K562 (cell line): ENCODE measurements at regions of chr19 and their contacts with region 1.

Region 1: GRCh38 chr19:13366529-13367143 is 139.6 kb downstream of the CACNA1A start:
- DNase-seq: peak; percentile 51 to 61 (median 54)
- ATAC-seq: peak; percentile 86
- H3K4me3 ChIP-seq: no peak overlapping the region
- H3K27ac ChIP-seq: no peak overlapping the region
- H3K4me1 ChIP-seq: no peaks in the 10 kb centered on the region
- H3K27me3 ChIP-seq: peaks cover 6 to 26% of the 10 kb centered on the region in 2 experiments; a peak in 4 of 5 replicates
- CTCF ChIP-seq: peak; percentile 70 to 87 (median 84)
- EP300 ChIP-seq: no peak
- POLR2A ChIP-seq: no peak
- RAD21 ChIP-seq: peak; percentile 35 to 66

Region 2: DNA sequence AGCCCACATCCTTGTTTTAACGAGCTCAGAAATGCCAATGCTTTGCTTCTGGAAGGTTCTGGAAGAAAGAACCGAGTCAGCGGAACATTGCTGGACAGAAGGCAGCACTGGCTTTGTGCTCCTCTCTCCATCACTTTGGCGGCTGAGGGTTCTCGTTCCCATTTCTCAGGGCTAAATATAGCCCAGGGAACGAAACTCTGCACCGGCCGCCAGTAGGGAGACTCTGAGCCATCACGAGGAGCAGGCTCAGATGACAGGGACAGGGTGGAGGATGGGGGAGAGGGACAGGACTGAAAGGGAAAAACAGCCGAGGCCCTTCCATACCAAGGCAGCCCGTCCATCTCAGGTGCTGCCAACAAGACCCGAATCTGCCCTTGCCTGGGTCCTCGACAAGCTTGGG is 26.8 kb before region 1 on chr19:
- CTCF ChIA-PET with region 1: no interaction called
- POLR2A ChIA-PET with region 1: no interaction called
- in situ Hi-C with region 1: no loop called
- intact Hi-C with region 1: no loop called
- DNase-seq: no peak
- ATAC-seq: no peak
- H3K4me3 ChIP-seq: no peak overlapping the region
- H3K27ac ChIP-seq: no peak overlapping the region
- H3K4me1 ChIP-seq: no peaks in the 10 kb centered on the region
- H3K27me3 ChIP-seq: peaks cover 3 to 10% of the 10 kb centered on the region in 2 experiments; a peak in 3 of 5 replicates
- CTCF ChIP-seq: no peak
- EP300 ChIP-seq: no peak
- POLR2A ChIP-seq: no peak
- RAD21 ChIP-seq: no peak

Region 3: DNA sequence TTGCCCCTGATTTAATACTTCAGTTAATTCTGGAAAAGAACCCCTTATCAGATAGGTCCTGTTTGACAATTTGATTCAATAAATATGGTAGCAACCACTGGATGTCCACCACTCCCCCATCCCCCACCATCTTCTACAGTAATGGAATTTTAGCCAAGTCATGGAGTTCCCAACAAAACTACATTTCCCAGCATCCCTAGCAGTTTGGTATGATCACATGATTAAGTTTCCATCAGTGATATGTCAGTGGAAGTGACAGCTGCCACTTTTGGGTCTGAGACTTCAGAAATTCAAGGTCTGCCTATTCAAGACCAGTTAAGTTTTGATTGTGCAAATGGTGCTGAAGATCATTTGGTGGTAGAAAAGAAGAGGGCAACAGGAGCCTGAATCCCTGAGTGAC is 54.1 kb after region 1 on chr19:
- CTCF ChIA-PET with region 1: no interaction called
- POLR2A ChIA-PET with region 1: no interaction called
- in situ Hi-C with region 1: loop called (anchors 5 kb)
- intact Hi-C with region 1: no loop called
- DNase-seq: peak in 1 of 4 experiments; percentile 25
- ATAC-seq: peak; percentile 53; the same call in 2 of the 3 replicates
- H3K4me3 ChIP-seq: no peak overlapping the region
- H3K27ac ChIP-seq: no peak overlapping the region
- H3K4me1 ChIP-seq: no peaks in the 10 kb centered on the region; a peak in 1 of 5 replicates
- H3K27me3 ChIP-seq: peaks cover 0 to 12% of the 10 kb centered on the region in 2 experiments; a peak in 2 of 5 replicates
- CTCF ChIP-seq: no peak
- EP300 ChIP-seq: no peak
- POLR2A ChIP-seq: no peak
- RAD21 ChIP-seq: no peak

Region 4: GRCh38 chr19:13430790-13431582 is 64.3 kb after region 1 on chr19:
- CTCF ChIA-PET with region 1: interaction called, 53 read pairs
- POLR2A ChIA-PET with region 1: no interaction called
- in situ Hi-C with region 1: no loop called
- intact Hi-C with region 1: loop called (anchors 1 kb)
- DNase-seq: peak; percentile 56 to 76 (median 62)
- ATAC-seq: peak; percentile 92
- H3K4me3 ChIP-seq: no peak overlapping the region
- H3K27ac ChIP-seq: no peak overlapping the region
- H3K4me1 ChIP-seq: no peaks in the 10 kb centered on the region; a peak in 2 of 5 replicates
- H3K27me3 ChIP-seq: peaks cover 0 to 5% of the 10 kb centered on the region in 2 experiments; a peak in 1 of 5 replicates
- CTCF ChIP-seq: peak; percentile 87 to 90 (median 88)
- EP300 ChIP-seq: no peak
- POLR2A ChIP-seq: no peak
- RAD21 ChIP-seq: peak; percentile 44 to 77

Region 5: DNA sequence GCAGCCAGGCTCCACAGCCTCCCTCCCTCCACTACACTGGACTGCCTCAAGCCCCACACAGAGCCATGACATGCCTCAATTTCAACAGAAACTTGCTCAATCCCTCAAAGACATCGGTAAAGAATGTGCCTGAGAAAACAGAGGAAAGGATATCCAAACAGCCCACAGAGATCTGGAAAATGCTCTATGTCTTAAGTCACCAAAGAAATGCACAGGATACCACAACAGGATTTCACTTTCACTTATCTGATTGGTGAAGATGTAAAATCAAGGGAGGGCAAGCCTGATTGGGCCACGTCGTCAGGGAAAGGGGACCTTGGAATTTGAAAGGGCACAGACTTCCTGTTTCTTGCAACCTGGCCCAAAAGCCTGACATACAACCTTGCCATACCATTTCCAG is 125.5 kb after region 1 on chr19:
- CTCF ChIA-PET with region 1: no interaction called
- POLR2A ChIA-PET with region 1: no interaction called
- in situ Hi-C with region 1: no loop called
- intact Hi-C with region 1: no loop called
- DNase-seq: no peak
- ATAC-seq: no peak
- H3K4me3 ChIP-seq: no peak overlapping the region
- H3K27ac ChIP-seq: no peak overlapping the region
- H3K4me1 ChIP-seq: no peaks in the 10 kb centered on the region
- H3K27me3 ChIP-seq: no peaks in the 10 kb centered on the region
- CTCF ChIP-seq: no peak
- EP300 ChIP-seq: no peak
- POLR2A ChIP-seq: no peak
- RAD21 ChIP-seq: no peak

Region 6: GRCh38 chr19:13574933-13575332 is 208.3 kb after region 1 on chr19:
- CTCF ChIA-PET with region 1: interaction called, 5 read pairs
- POLR2A ChIA-PET with region 1: interaction called, 3 read pairs
- in situ Hi-C with region 1: no loop called
- intact Hi-C with region 1: loop called (anchors 1 kb)
- DNase-seq: peak; percentile 37 to 49 (median 48)
- ATAC-seq: peak; percentile 75; the same call in 2 of the 3 replicates
- H3K4me3 ChIP-seq: no peak overlapping the region
- H3K27ac ChIP-seq: no peak overlapping the region
- H3K4me1 ChIP-seq: no peaks in the 10 kb centered on the region
- H3K27me3 ChIP-seq: peaks cover 0 to 18% of the 10 kb centered on the region in 2 experiments; a peak in 3 of 5 replicates
- CTCF ChIP-seq: peak; percentile 67 to 76 (median 75)
- EP300 ChIP-seq: no peak
- POLR2A ChIP-seq: no peak
- RAD21 ChIP-seq: peak in 1 of 2 experiments; percentile 67; a peak in 2 of 4 replicates

Region 7: GRCh38 chr19:13588957-13589833 is 222.6 kb after region 1 on chr19:
- CTCF ChIA-PET with region 1: interaction called, 11 read pairs
- POLR2A ChIA-PET with region 1: no interaction called
- in situ Hi-C with region 1: no loop called
- intact Hi-C with region 1: loop called (anchors 1 kb)
- DNase-seq: peak; percentile 71 to 83 (median 78)
- ATAC-seq: peak; percentile 98
- H3K4me3 ChIP-seq: no peak overlapping the region
- H3K27ac ChIP-seq: no peak overlapping the region
- H3K4me1 ChIP-seq: peaks cover 0 to 7% of the 10 kb centered on the region in 2 experiments; a peak in 1 of 5 replicates
- H3K27me3 ChIP-seq: peaks cover 0 to 4% of the 10 kb centered on the region in 2 experiments; a peak in 1 of 5 replicates
- CTCF ChIP-seq: peak; percentile 88 to 95 (median 93)
- EP300 ChIP-seq: no peak
- POLR2A ChIP-seq: no peak
- RAD21 ChIP-seq: peak; percentile 71 to 85